ENCODE measurements at regions of chrX and their contacts with region 1.

Region 1: DNA sequence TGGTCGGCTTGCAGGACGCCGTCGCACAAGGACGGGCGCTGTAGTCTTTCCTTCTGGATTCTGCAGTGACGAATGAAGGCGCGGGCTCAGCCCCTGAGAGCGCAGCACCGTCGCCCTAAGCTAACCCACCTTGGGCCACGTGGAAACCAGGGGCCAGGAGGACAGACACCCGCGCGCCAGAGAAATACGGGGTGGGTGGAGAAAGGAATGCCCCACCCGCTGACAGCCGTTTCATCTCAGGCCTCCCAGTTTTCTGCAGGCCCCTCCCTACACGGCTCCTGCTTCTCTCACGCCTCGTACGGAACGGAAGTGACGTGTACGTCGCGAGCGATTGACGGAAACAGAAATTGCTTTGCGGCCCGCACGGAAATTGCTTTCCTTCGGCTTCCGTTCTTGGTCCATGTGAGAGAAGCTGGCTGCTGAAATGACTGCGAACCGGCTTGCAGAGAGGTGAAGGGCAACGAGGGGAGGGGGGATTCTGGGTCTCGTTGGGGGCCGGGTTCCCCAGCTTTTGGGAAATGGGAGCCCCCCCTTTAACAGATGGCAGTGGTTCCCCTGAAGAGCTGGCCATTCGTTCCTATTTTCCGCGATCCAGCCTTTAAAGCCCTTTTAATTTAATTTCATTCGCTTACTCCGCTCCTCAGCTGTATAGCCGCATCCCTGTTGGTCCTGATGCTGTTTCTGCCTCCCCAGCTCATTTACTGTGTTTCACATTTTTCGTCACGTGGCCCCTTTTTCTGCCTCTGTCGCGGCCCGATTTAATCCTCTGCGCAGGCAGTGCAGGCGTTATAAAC is at the start of gene UTP14A:
- DNase-seq: peak; percentile 92
- H3K4me3 Mint-ChIP-seq: peak within 1 kb of the TSS; percentile 88
- H3K27ac Mint-ChIP-seq: peak within 1 kb of the TSS; percentile 88
- H3K4me1 Mint-ChIP-seq: peaks cover 23% of the 10 kb centered on the region
- H3K27me3 Mint-ChIP-seq: no peaks in the 10 kb centered on the region
- total RNA-seq, gene UTP14A: 29.9 to 31.7 TPM

Region 2: DNA sequence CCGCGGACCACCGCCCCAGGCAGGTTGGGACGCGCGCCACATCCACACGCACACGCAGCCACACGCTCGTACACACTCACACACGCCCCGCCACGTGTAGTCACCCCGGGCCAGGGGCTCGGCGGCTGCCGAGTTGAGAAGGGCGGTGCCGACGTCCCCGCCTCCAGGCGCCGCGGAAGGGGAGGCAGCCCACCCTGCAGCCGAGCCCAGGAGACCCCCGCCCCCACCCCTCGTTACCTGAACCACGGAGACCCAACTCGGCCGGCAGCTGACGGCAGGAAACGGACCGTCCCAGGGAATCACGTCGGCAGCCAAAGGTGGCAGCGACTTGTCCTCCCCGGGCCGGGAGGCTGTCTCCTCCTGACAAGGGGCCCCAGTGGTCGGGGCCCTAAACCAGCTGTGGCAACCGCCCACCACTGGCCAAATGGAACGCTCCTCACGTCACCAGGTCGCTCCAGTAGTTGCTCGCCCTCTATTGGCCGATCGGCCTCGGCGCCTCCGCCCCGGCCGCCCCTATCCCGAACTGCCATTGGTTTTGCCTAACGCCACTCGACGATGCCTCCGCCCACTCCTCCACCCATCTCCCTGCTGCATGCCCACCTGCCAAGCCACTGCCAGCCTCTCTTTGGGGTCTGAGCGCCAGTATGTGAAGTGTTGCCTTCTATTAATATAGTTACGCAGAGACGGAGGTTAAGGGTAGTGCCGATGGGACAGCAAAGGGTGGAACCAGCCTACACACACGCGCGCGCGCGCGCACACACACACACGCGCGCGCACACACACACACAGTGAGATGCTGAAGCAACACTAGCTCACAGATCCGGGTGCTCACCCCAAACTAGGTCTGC is 62.3 kb before region 1 on chrX and contains the start of gene ZDHHC9:
- CTCF ChIA-PET with region 1: no interaction called
- POLR2A ChIA-PET with region 1: interaction called, 3 read pairs
- intact Hi-C with region 1: loop called (anchors 1 kb)
- DNase-seq: peak; percentile 91
- H3K4me3 Mint-ChIP-seq: peak within 1 kb of the TSS; percentile 92
- H3K27ac Mint-ChIP-seq: peak within 1 kb of the TSS; percentile 77
- H3K4me1 Mint-ChIP-seq: peaks cover 23% of the 10 kb centered on the region
- H3K27me3 Mint-ChIP-seq: no peaks in the 10 kb centered on the region
- total RNA-seq, gene ZDHHC9: 9.0 to 11.0 TPM

Region 3: DNA sequence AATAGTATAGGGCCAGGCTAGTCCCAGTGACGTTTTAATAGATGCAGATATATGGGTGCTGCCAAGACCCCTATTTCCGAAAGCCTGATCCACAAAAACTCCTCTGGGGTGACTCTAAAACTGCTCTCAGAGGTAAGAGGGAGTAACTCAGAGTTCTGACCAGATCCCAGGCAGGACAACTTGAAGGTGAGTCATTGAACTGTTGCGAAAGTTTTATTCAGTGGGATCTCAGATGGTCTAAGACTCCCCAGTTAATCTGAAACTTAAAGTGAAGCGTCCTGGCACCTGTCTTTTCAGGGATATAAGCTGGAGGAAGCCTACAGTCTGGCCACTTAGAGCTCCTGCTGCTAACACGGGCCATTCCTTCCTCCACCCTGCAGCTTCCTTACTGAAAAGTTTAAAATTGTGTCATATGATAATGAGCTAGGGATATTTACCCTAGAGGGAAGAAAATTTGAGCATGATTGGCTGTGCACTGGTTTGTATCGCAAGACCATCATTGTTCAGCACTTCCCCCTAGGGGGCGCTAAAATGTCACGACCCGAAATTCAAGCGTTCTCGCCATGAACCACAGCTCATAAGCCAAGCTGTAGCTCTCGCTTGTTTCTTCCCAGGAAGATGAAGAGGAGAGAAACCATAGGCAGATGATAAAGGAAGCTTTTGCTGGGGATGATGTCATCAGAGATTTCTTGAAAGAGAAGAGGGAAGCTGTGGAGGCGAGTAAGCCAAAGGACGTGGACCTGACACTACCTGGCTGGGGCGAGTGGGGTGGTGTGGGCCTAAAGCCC is 19.5 kb after region 1 on chrX:
- CTCF ChIA-PET with region 1: interaction called, 18 read pairs
- POLR2A ChIA-PET with region 1: no interaction called
- intact Hi-C with region 1: no loop called
- DNase-seq: peak; percentile 76
- H3K4me3 Mint-ChIP-seq: no peak overlapping the region
- H3K27ac Mint-ChIP-seq: no peak overlapping the region
- H3K4me1 Mint-ChIP-seq: peaks cover 4% of the 10 kb centered on the region
- H3K27me3 Mint-ChIP-seq: no peaks in the 10 kb centered on the region